ENCODE measurements at regions of chr15 and their contacts with region 1.

Region 1: GRCh38 chr15:47473832-47474231 is 243.5 kb upstream of the SEMA6D start:
- DNase-seq: no peak
- ATAC-seq: no peak
- H3K4me3 ChIP-seq: no peak overlapping the region
- H3K27ac ChIP-seq: no peak overlapping the region
- H3K4me1 ChIP-seq: peaks cover 3% of the 10 kb centered on the region; the same call in 1 of the 2 replicates
- H3K27me3 ChIP-seq: no peaks in the 10 kb centered on the region
- CTCF ChIP-seq: no peak

Region 2: DNA sequence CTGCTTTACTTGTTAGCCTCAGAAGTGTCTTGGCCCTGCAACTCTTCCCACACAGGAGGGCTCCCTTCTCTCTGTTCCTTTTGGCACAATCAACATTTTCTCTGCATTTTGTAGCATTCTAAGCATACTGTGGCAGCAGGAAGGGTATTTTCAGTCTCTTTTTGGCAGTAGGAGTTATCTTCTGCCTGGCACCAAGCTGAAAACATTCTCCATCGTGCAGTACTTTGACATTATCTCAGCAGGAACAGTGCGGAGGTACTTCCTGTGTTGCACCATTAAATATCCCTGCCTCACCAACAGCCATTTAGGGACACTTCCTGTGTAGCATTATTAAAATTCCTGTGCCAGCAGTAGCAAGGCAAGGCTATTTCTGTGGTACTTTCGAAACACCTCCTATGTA is 10.2 kb after region 1 on chr15:
- CTCF ChIA-PET with region 1: interaction called, 10 read pairs
- POLR2A ChIA-PET with region 1: no interaction called
- intact Hi-C with region 1: no loop called
- DNase-seq: no peak
- ATAC-seq: no peak
- H3K4me3 ChIP-seq: no peak overlapping the region
- H3K27ac ChIP-seq: no peak overlapping the region
- H3K4me1 ChIP-seq: peaks cover 16% of the 10 kb centered on the region
- H3K27me3 ChIP-seq: no peaks in the 10 kb centered on the region
- CTCF ChIP-seq: no peak

Region 3: DNA sequence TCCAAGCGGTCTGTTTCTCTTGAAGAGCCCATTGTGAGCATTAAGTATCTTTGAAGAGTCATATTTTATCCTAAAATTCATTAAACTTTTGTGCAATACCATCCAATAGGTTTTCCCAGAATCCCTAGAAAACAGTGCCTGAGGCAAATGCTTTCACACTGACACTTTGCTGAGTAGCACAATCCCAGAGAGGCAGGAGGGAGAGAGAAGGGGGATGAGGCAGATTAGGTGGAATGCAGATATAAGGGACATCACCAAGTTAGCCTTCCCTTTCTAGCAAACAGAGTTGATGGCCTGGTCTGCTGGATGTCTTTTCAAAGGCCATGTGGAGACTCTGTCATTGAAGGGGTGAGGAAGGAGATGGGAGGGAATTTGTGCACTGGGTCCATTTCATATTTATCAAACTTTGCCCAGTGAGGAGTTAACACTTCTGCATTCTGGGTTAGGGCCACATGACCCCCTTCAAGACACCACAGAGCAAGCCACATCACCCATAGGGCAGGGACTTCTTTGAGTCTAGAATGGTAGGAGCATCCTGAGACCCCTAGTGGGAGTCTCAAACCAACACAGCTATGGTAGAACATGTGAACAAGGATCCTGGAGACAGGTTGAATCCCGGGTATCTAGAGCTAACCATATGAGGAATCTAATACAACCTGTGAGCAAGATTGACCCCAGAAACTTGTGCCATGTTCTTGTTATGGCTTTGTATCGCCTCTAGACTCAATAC is 211.5 kb after region 1 on chr15:
- CTCF ChIA-PET with region 1: no interaction called
- POLR2A ChIA-PET with region 1: no interaction called
- intact Hi-C with region 1: no loop called
- DNase-seq: peak; percentile 72
- ATAC-seq: no peak; the same call in 1 of the 2 replicates
- H3K4me3 ChIP-seq: no peak overlapping the region
- H3K27ac ChIP-seq: no peak overlapping the region
- H3K4me1 ChIP-seq: peaks cover 23% of the 10 kb centered on the region
- H3K27me3 ChIP-seq: no peaks in the 10 kb centered on the region
- CTCF ChIP-seq: no peak; the same call in 1 of the 2 replicates